Endothelial cell of umbilical vein (primary cell): ENCODE measurements at regions of chr18 and their contacts with region 1.

Region 1: GRCh38 chr18:35467624-35468016 is 30.1 kb downstream of the INO80C start:
- DNase-seq: peak; percentile 18
- H3K4me3 ChIP-seq: no peak overlapping the region
- H3K27ac ChIP-seq: peak overlapping the region; percentile 90
- H3K4me1 ChIP-seq: peaks cover 72% of the 10 kb centered on the region
- H3K27me3 ChIP-seq: no peaks in the 10 kb centered on the region
- CTCF ChIP-seq: no peak
- POLR2A ChIP-seq: peak; percentile 4

Region 2: DNA sequence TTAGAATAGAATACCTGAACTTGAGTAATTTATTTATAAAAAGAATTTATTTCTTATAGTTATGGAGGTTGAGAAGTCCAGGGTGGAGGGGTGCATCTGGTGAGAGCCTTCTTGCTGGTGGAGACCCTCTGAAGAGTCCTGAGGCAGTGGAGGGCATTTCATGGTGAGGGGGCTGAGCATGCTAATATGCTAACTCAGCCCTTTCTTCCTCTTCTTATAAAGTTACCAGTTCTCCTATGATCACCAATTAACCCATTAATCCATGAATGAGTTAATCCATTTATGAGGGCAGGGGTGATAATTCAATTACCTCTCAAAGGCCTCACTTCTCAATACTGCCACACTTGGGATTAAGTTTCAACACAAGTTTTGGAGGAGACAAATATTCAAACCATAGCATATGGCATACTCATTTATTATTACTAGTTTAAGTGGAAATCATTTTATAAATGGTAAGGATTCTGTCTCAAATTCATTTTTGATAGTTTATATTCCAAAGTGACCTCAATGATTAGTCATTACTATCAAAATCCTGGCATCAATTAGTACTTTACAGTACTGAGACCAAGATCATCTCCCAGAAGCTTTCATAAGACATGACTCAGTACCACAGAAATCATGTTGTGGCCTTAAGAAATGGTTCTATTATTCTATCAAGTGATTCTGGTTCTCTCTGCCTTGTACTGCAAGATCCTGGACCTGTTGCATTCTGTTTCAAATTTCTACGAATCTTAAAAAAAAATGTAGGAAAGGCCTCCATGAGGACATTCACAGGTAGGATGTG is 96.0 kb before region 1 on chr18:
- CTCF ChIA-PET with region 1: no interaction called
- POLR2A ChIA-PET with region 1: no interaction called
- dilution Hi-C with region 1: no loop called
- intact Hi-C with region 1: no loop called
- DNase-seq: no peak
- H3K4me3 ChIP-seq: no peak overlapping the region
- H3K27ac ChIP-seq: no peak overlapping the region
- H3K4me1 ChIP-seq: peaks cover 5% of the 10 kb centered on the region
- H3K27me3 ChIP-seq: peaks cover 0 to 1% of the 10 kb centered on the region in 2 experiments
- CTCF ChIP-seq: no peak
- POLR2A ChIP-seq: no peak

Region 3: DNA sequence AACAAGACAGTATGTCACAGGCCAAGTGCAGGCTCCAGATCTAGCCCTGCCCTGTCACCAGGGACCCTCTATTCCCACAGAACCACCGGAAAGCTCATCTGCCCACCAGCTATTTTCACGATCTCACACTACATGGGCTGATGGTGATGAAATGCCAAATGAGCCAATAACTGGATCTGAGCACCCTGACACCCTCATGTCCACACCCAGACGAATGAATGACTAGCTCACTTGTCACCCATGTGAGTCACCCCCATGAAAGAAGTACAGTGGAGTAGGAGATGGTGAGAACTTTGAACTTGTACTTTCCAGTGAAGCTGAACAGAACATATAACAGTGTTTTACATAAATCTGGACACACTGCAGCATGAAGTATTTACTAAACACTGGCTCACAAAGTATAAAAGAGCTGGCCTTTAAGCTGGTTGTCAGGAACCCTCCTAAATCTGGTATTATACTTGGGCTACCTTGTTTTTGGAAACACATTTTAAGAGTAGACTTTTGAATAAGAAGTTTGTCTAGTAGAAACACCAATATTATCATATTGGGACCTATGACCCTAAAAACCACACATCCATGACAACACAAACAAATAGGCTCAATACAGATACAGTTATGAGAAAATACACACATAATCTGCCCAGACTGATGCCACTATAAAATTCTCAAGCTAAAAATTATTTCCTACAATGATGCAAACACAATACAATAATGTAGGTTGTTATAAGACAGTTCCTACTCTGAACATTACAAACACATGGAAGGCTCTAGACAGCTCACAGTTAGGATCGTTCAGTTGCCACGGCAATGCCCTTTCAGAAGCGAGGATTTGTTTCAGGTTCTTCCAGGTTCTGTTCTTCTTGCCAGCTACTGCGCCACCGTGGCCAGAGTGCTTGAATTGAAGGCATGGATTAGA is 11.2 kb after region 1 on chr18:
- CTCF ChIA-PET with region 1: interaction called, 7 read pairs
- POLR2A ChIA-PET with region 1: no interaction called
- dilution Hi-C with region 1: no loop called
- intact Hi-C with region 1: loop called (anchors 1 kb)
- DNase-seq: peak; percentile 81
- H3K4me3 ChIP-seq: peak overlapping the region in 2 of 3 experiments; percentile 46 to 47
- H3K27ac ChIP-seq: peak overlapping the region; percentile 90
- H3K4me1 ChIP-seq: peaks cover 45% of the 10 kb centered on the region
- H3K27me3 ChIP-seq: no peaks in the 10 kb centered on the region
- CTCF ChIP-seq: no peak
- POLR2A ChIP-seq: no peak

Region 4: DNA sequence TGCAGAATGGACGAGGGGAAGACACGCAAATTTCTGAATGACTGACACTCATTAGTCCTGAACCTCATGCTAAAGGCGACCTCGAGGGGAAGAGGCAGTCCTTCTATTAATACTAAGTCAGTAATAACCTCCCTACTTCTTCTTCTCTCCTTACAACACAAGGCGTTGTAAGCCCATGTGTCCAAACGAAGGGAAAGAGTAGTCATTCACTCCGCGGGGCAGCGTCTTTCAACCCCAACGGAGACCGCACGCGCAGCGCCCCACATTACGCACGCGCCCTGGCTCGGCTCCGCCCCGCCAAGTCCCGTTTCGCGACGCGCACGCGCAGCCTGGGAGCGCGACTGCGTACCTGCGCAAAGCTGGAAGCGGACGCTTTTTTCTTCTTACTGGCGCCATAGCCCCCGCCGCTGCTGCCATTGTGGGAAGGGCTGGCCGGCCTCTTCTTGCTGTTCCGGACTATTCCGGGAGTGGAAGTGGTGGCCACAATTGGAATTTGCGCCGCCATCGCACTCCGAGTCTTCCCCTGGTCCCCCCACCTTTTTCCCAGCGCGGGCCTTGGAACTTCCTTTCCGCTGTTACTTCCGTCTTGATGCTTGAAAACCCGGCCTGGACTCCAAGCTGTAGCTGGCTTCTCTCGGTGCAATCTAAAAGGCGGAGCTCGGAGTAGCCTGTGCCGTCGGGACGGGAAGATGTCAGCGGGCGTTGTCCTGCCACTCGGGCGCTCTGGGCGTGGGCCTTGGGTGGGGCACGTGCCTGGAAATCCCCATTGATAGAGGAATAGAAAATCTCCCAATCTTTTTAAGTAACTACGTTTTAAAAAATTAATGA is 30.0 kb after region 1 on chr18 and contains the start of gene INO80C:
- CTCF ChIA-PET with region 1: interaction called, 8 read pairs
- POLR2A ChIA-PET with region 1: interaction called, 3 read pairs
- dilution Hi-C with region 1: no loop called
- intact Hi-C with region 1: loop called (anchors 1 kb)
- DNase-seq: peak; percentile 96
- H3K4me3 ChIP-seq: peak within 1 kb of the TSS; percentile 60 to 89 (median 73)
- H3K27ac ChIP-seq: peak within 1 kb of the TSS; percentile 93
- H3K4me1 ChIP-seq: peaks cover 23% of the 10 kb centered on the region
- H3K27me3 ChIP-seq: no peaks in the 10 kb centered on the region
- CTCF ChIP-seq: no peak
- POLR2A ChIP-seq: peak; percentile 88
- total RNA-seq, gene INO80C: 51.4 and 56.0 TPM in 2 replicates

Region 5: DNA sequence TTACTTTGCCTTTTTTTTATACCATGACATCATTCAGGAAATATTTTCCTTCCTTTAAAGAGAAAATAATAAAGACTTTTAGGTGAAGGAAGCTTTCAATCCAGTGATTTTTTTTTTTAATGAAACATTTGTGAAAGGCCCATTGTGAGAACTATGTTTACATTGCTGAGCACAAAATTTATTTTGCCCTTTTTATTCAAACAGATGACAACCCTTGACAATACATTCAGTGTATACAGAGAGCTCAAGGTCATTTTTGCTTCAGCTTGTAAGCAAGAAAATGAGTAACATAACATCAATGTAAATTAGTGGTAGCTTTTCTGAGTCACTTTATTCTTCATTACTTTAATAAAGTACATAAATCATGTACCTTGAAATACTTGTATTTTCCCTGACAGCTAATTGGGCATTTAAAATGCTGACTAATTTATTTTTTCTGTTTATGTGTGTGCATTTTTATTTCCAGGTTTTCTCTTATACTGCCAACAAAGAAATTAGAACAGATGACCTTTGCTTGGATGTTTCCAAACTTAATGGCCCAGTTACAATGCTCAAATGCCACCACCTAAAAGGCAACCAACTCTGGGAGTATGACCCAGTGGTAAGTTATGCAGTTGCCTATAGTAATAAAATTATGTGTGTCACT is 235.5 kb after region 1 on chr18:
- CTCF ChIA-PET with region 1: no interaction called
- POLR2A ChIA-PET with region 1: interaction called, 3 read pairs
- dilution Hi-C with region 1: no loop called
- intact Hi-C with region 1: loop called (anchors 2 kb)
- DNase-seq: peak; percentile 92
- H3K4me3 ChIP-seq: no peak overlapping the region
- H3K27ac ChIP-seq: peak overlapping the region; percentile 87
- H3K4me1 ChIP-seq: peaks cover 47% of the 10 kb centered on the region
- H3K27me3 ChIP-seq: no peaks in the 10 kb centered on the region
- CTCF ChIP-seq: no peak
- POLR2A ChIP-seq: no peak